HepG2 (cell line): ENCODE measurements at regions of chr1 and their contacts with region 1.

Region 1: GRCh38 chr1:109773146-109773899 is 9.6 kb upstream of the EPS8L3 start:
- DNase-seq: peak; percentile 78
- ATAC-seq: peak; percentile 86
- H3K4me3 ChIP-seq: no peak overlapping the region
- H3K27ac ChIP-seq: no peak overlapping the region
- H3K4me1 ChIP-seq: peaks cover 42% of the 10 kb centered on the region
- H3K27me3 ChIP-seq: peaks cover 2 to 19% of the 10 kb centered on the region in 2 experiments; a peak in 3 of 5 replicates
- CTCF ChIP-seq: peak; percentile 98
- EP300 ChIP-seq: no peak
- POLR2A ChIP-seq: no peak
- RAD21 ChIP-seq: peak; percentile 96

Region 2: GRCh38 chr1:109643385-109644230 is 129.7 kb before region 1 on chr1:
- CTCF ChIA-PET with region 1: interaction called, 26 read pairs
- POLR2A ChIA-PET with region 1: interaction called, 3 read pairs
- in situ Hi-C with region 1: loop called (anchors 5 kb)
- intact Hi-C with region 1: loop called (anchors 1 kb)
- DNase-seq: peak; percentile 67
- ATAC-seq: peak; percentile 92
- H3K4me3 ChIP-seq: peak overlapping the region; percentile 34 to 67 (median 48)
- H3K27ac ChIP-seq: no peak overlapping the region
- H3K4me1 ChIP-seq: peaks cover 23% of the 10 kb centered on the region
- H3K27me3 ChIP-seq: 0 out of 5 replicates have a peak, but pooled peaks cover 0 to 3% of the 10 kb centered on the region in 2 experiments
- CTCF ChIP-seq: peak; percentile 94
- EP300 ChIP-seq: 0 out of 4 replicates have a peak, but pooled peaks of 1 of the 2 experiments have one; percentile 5
- POLR2A ChIP-seq: no peak
- RAD21 ChIP-seq: peak; percentile 90

Region 3: GRCh38 chr1:109718491-109718890 is 54.8 kb before region 1 on chr1:
- CTCF ChIA-PET with region 1: interaction called, 15 read pairs
- POLR2A ChIA-PET with region 1: no interaction called
- in situ Hi-C with region 1: loop called (anchors 5 kb)
- intact Hi-C with region 1: loop called (anchors 1 kb)
- DNase-seq: peak; percentile 65
- ATAC-seq: peak; percentile 93
- H3K4me3 ChIP-seq: no peak overlapping the region
- H3K27ac ChIP-seq: no peak overlapping the region
- H3K4me1 ChIP-seq: no peaks in the 10 kb centered on the region
- H3K27me3 ChIP-seq: peaks cover 3 to 35% of the 10 kb centered on the region in 2 experiments; a peak in 3 of 5 replicates
- CTCF ChIP-seq: peak; percentile 75
- EP300 ChIP-seq: no peak
- POLR2A ChIP-seq: no peak
- RAD21 ChIP-seq: 0 out of 2 replicates have a peak, but pooled peaks have one; percentile 25

Region 4: DNA sequence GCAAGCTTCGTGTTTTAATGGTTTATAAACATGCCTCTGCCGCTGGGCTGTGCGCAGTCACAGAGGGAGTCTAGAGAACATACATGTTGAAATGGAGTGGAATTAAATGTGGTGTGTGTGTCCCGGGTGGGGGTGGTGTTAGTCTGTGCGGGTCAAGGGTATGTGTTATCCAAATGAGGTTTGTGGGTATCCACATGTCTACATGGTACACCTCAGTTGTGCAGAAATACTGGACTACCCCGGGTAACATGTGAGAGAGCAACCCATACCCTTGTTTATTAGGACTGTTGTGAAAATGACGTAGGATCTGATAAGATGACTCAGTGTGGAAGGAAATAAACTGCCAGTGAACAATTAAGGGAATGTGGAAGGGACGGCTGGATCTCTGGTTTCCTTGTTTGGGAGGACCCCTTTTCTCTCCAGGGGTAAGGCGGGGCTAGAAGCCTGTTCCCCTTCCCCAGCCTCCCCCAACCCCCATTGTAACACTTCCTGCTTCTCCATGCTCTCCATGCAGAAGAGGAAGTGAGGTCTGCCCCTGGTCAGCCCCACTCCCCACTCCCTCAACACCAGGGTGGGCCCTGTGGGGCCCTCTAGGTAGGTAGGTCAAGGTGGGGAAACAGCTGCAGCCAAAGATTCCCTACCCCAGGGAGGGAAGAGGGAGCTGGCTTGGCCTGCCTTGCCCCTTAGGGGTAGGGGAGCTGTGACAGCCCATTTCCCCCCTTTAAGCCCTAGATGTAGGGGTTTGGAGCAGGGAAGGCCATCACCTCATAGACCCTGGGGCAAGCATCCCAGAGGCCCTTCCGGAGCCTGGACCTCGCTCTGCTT is 10.3 kb before region 1 on chr1:
- CTCF ChIA-PET with region 1: no interaction called
- POLR2A ChIA-PET with region 1: interaction called, 8 read pairs
- in situ Hi-C with region 1: no loop called
- intact Hi-C with region 1: loop called (anchors 1 kb)
- DNase-seq: no peak
- ATAC-seq: peak; percentile 2; the same call in 2 of the 3 replicates
- H3K4me3 ChIP-seq: peak overlapping the region; percentile 76 to 88 (median 79)
- H3K27ac ChIP-seq: peak overlapping the region; percentile 74
- H3K4me1 ChIP-seq: peaks cover 80% of the 10 kb centered on the region
- H3K27me3 ChIP-seq: no peaks in the 10 kb centered on the region; a peak in 2 of 5 replicates
- CTCF ChIP-seq: no peak
- EP300 ChIP-seq: no peak
- POLR2A ChIP-seq: no peak
- RAD21 ChIP-seq: no peak

Region 5: GRCh38 chr1:109877320-109877771 is 104.0 kb after region 1 on chr1:
- CTCF ChIA-PET with region 1: no interaction called
- POLR2A ChIA-PET with region 1: no interaction called
- in situ Hi-C with region 1: no loop called
- intact Hi-C with region 1: no loop called
- DNase-seq: peak; percentile 79
- ATAC-seq: peak; percentile 96
- H3K4me3 ChIP-seq: peak overlapping the region; percentile 33 to 72 (median 51)
- H3K27ac ChIP-seq: no peak overlapping the region
- H3K4me1 ChIP-seq: peaks cover 88% of the 10 kb centered on the region
- H3K27me3 ChIP-seq: no peaks in the 10 kb centered on the region; a peak in 1 of 5 replicates
- CTCF ChIP-seq: peak; percentile 58
- EP300 ChIP-seq: 0 out of 4 replicates have a peak, but pooled peaks of 1 of the 2 experiments have one; percentile 7
- POLR2A ChIP-seq: no peak
- RAD21 ChIP-seq: 0 out of 2 replicates have a peak, but pooled peaks have one; percentile 29

Region 6: GRCh38 chr1:110011527-110012041 is 238.3 kb after region 1 on chr1:
- CTCF ChIA-PET with region 1: interaction called, 12 read pairs
- POLR2A ChIA-PET with region 1: no interaction called
- in situ Hi-C with region 1: no loop called
- intact Hi-C with region 1: loop called (anchors 1 kb)
- DNase-seq: peak; percentile 36
- ATAC-seq: peak; percentile 91
- H3K4me3 ChIP-seq: no peak overlapping the region
- H3K27ac ChIP-seq: no peak overlapping the region
- H3K4me1 ChIP-seq: no peaks in the 10 kb centered on the region
- H3K27me3 ChIP-seq: no peaks in the 10 kb centered on the region
- CTCF ChIP-seq: peak; percentile 58
- EP300 ChIP-seq: no peak
- POLR2A ChIP-seq: no peak
- RAD21 ChIP-seq: peak; percentile 41; the same call in 1 of the 2 replicates